B cell (primary cell): ENCODE measurements at regions of chr14 and their contacts with region 1.

Region 1: DNA sequence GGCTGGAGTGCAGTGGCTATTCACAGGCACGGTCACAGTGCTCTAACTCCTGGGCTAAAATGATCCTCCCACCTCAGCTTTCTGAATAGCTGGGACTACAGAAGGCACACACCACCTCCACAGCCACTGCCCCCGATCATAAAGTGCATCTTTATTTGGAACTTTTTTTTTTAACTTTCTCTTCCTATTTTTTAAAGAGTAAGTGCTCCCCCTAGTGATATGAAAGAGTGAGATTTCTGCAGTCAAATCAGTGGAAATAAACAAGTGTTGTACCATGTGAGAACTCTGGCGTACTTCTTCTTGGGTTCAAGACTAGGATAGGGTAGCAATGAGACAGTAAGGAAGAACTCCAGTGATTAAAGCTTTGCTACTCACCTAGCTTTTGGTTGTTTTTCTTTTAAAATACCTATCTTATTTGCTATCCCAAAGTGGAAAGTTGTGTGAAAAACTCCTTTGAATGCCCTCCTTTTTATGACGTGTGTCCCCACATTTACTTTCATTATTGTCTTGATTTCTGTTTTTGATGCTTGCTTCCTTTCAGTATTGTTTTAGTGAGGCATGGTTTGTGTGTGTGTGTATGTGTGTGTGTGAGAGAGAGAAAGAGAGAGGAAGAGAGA is 6.6 kb downstream of the PPP4R4 start:
- DNase-seq: peak; percentile 78
- ATAC-seq: peak; percentile 84
- H3K4me3 ChIP-seq: peak overlapping the region in 3 of 5 experiments; percentile 10 to 35 (median 20)
- H3K4me3 Mint-ChIP-seq: peak overlapping the region; percentile 8
- H3K27ac ChIP-seq: no peak overlapping the region
- H3K27ac Mint-ChIP-seq: peak overlapping the region; percentile 4
- H3K4me1 ChIP-seq: peaks cover 5 to 7% of the 10 kb centered on the region in 2 donors
- H3K4me1 Mint-ChIP-seq: peaks cover 6% of the 10 kb centered on the region
- H3K27me3 ChIP-seq: peaks cover 2 to 32% (median 17%) of the 10 kb centered on the region in 4 experiments
- H3K27me3 Mint-ChIP-seq: peaks cover 40% of the 10 kb centered on the region
- CTCF ChIP-seq: peak; percentile 82

Region 2: DNA sequence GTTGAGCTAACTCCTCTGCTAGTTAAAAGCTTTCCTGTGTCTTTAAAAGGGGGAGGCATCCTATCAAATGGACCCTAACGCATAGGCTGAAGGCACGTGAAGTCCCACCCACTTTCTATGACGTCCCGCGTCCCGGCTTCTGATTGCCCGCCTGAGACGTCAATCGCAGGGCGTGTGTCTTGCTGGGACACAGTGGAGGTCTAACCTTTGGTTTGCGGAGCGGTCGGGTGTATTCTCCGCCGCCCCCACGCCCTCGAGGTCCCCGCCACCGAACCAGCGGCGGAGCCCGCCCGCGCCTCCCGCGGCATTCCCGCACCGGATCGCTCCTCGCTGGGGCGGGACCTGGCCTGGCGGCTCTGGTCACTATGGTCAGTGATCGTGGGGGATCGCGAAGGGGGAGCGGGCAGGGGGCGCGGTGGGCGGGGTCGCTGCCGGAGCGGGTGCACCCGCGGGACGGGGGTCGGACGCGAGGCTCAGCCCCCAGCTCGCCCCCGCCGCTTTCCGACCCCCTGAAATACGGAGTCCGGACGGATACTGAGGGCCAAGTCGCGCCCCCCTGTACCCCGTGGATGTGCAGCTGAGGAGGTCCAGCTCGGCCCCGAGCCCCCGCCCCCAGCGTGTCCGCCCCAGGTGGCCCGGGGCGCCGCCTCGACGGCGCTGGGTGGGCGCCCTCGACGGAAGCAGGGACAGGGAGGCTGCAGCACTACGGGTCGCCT is 154.4 kb before region 1 on chr14 and contains the start of gene OTUB2:
- CTCF ChIA-PET with region 1: interaction called, 3 read pairs
- POLR2A ChIA-PET with region 1: no interaction called
- intact Hi-C with region 1: loop called (anchors 1 kb)
- DNase-seq: peak; percentile 98
- ATAC-seq: peak; percentile 100
- H3K4me3 ChIP-seq: peak within 1 kb of the TSS in 4 of 5 experiments; percentile 38 to 64 (median 58)
- H3K4me3 Mint-ChIP-seq: peak within 1 kb of the TSS; percentile 90
- H3K27ac ChIP-seq: no peak within 1 kb of the TSS
- H3K27ac Mint-ChIP-seq: peak within 1 kb of the TSS; percentile 70
- H3K4me1 ChIP-seq: peaks cover 9% of the 10 kb centered on the region in 2 donors
- H3K4me1 Mint-ChIP-seq: peaks cover 8% of the 10 kb centered on the region
- H3K27me3 ChIP-seq: peaks cover 0 to 22% (median 9%) of the 10 kb centered on the region in 4 experiments
- H3K27me3 Mint-ChIP-seq: peaks cover 22% of the 10 kb centered on the region
- CTCF ChIP-seq: no peak
- total RNA-seq, gene OTUB2: 0.17 and 0.19 TPM in 2 replicates

Region 3: DNA sequence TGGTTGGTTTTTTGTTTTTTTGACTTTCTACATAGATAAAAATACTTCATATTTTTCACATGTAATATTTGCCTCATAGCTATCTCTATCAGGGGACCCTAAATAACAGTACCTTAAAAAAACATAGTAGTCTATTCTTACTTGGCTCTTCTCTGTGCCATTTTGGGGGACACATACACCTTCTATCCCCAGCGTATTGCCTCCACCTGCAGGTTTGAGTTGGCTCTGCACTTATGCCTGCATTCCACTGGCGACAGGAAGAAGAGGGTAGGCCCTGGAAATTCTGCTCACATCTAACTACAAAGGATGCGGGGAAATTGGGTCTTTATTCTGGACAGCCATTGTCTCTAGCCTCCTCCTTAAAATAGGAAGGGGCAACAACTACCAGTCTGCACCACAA is 37.5 kb before region 1 on chr14:
- CTCF ChIA-PET with region 1: interaction called, 10 read pairs
- POLR2A ChIA-PET with region 1: no interaction called
- intact Hi-C with region 1: no loop called
- DNase-seq: no peak
- ATAC-seq: no peak
- H3K4me3 ChIP-seq: no peak overlapping the region
- H3K4me3 Mint-ChIP-seq: no peak overlapping the region
- H3K27ac ChIP-seq: no peak overlapping the region
- H3K27ac Mint-ChIP-seq: no peak overlapping the region
- H3K4me1 ChIP-seq: no peaks in the 10 kb centered on the region
- H3K4me1 Mint-ChIP-seq: peaks cover 4% of the 10 kb centered on the region
- H3K27me3 ChIP-seq: no peaks in the 10 kb centered on the region
- H3K27me3 Mint-ChIP-seq: peaks cover 5% of the 10 kb centered on the region
- CTCF ChIP-seq: no peak